A673 (cell line): ENCODE measurements at regions of chr19 and their contacts with region 1.

Region 1: GRCh38 chr19:50537762-50538230 is 24.1 kb upstream of the ASPDH start:
- DNase-seq: peak; percentile 90
- H3K4me3 ChIP-seq: no peak overlapping the region
- H3K27ac ChIP-seq: no peak overlapping the region
- H3K4me1 ChIP-seq: no peaks in the 10 kb centered on the region
- H3K27me3 ChIP-seq: no peaks in the 10 kb centered on the region
- CTCF ChIP-seq: peak; percentile 95

Region 2: DNA sequence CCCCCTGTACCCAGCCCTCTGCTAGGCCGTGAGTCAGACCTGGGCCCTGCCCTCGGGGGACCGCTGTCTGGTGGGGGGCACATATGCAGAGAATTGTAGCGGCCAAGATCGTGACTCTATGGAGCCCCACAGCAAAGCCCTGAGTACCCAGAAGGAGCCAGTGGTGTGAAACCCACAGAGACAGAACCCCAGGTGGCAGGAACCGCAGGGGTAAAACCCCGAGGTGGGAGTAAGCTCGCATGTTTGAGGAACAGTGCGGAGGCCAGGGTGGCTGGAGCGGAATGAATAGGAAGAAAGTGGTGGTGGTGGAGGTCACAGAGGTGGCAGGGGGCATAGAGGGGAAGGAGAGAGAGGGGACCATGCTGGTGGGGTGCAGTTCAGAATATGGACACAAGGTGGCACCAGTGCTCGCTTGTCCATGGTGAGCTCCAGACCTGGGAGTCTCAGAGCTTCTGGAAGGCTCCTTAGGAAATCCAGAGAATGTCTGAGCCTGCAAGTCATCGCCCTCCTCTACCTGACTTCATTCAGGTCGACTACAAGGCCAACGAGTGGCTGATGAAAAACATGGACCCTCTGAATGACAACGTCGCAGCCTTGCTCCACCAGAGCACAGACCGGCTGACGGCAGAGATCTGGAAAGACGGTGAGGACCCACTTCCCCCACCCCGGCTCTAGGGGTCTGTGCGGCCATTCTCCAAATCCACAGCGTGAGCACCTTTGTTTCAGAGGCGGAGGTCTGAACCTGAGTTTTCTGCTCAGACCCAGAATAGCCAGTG is 285.5 kb before region 1 on chr19:
- CTCF ChIA-PET with region 1: interaction called, 13 read pairs
- POLR2A ChIA-PET with region 1: no interaction called
- intact Hi-C with region 1: no loop called
- DNase-seq: peak; percentile 51
- H3K4me3 ChIP-seq: no peak overlapping the region
- H3K27ac ChIP-seq: no peak overlapping the region
- H3K4me1 ChIP-seq: no peaks in the 10 kb centered on the region
- H3K27me3 ChIP-seq: no peaks in the 10 kb centered on the region
- CTCF ChIP-seq: peak; percentile 77

Region 3: GRCh38 chr19:50556282-50557008 is 18.6 kb after region 1 on chr19:
- CTCF ChIA-PET with region 1: interaction called, 15 read pairs
- POLR2A ChIA-PET with region 1: no interaction called
- intact Hi-C with region 1: no loop called
- DNase-seq: peak; percentile 86
- H3K4me3 ChIP-seq: peak overlapping the region; percentile 47
- H3K27ac ChIP-seq: no peak overlapping the region
- H3K4me1 ChIP-seq: peaks cover 11% of the 10 kb centered on the region
- H3K27me3 ChIP-seq: no peaks in the 10 kb centered on the region
- CTCF ChIP-seq: peak; percentile 100

Region 4: GRCh38 chr19:50580970-50581634 is 43.3 kb after region 1 on chr19:
- CTCF ChIA-PET with region 1: no interaction called
- POLR2A ChIA-PET with region 1: no interaction called
- intact Hi-C with region 1: no loop called
- DNase-seq: no peak
- H3K4me3 ChIP-seq: no peak overlapping the region
- H3K27ac ChIP-seq: no peak overlapping the region
- H3K4me1 ChIP-seq: no peaks in the 10 kb centered on the region
- H3K27me3 ChIP-seq: no peaks in the 10 kb centered on the region
- CTCF ChIP-seq: no peak